ENCODE measurements at regions of chr19 and their contacts with region 1.

Region 1: DNA sequence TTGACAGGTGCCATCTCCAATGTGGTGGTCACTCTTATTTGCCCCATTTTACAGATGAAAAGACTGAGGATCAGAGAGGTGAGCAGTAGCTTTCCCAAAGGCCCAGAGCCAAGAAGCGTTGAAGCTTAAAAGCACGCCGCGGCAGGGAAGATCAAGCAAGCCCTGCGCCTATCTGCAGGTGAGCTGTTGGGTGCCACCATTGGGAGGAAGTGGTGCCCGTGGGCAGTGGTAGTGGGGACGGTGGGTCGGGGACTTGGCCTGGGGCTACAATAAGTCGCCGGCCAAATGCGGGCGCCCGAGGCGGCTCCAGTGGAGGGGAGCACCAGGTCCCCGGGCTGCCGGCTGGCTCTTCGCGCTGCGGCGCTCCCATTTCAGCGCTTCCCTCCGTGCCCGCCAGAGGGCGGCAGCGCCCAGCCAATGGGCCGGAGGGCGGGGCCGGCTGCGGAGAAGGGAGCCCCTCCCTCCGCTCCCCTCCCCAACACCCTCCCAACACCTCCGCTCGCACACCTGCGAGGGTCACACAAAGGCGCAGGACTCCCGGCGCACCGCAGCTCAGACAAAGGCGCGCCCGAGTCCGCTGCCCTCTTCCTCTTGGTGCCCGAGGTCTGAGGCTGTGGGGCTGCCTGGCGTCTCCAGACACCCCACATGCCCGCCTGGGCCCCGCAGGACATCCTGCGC is 744 bp upstream of the POU2F2 start:
- DNase-seq: peak; percentile 91
- ATAC-seq: peak; percentile 86
- H3K4me3 Mint-ChIP-seq: peak overlapping the region; percentile 76
- H3K27ac Mint-ChIP-seq: no peak overlapping the region
- H3K4me1 Mint-ChIP-seq: peaks cover 20% of the 10 kb centered on the region
- H3K27me3 Mint-ChIP-seq: peaks cover 30% of the 10 kb centered on the region
- CTCF ChIP-seq: peak; percentile 91

Region 2: DNA sequence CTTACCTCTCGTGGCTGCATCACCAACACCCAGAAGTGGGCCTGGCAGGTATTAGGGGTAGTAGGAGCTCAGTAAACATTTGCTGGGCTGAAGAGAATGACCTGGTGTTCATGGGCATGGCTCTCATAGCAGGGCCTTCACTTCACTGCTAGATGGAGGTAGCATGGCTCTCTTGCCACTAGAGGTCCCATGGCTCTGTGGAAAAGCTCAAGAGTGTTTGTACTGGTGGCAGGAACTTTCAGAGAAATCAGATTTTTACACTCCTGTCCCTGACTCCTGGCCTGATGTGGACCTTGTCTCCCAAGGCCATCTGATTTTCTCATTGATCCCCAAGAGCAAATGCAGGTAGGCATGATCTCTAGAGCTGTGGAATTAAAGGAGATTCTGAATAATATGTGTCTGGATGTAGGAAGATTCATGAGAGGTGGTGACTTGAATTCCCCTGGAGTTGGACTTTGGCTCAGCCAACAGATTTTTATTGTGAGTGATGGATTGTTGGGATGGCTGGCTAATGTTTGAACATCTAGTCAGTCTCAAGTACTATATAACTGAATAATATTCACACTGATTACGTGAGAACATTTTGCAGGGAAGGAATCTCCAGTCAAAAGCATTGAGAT is 51.3 kb before region 1 on chr19:
- CTCF ChIA-PET with region 1: no interaction called
- POLR2A ChIA-PET with region 1: no interaction called
- DNase-seq: no peak
- ATAC-seq: peak; percentile 72
- H3K4me3 Mint-ChIP-seq: no peak overlapping the region
- H3K27ac Mint-ChIP-seq: peak overlapping the region; percentile 46; the same call in 1 of the 2 replicates
- H3K4me1 Mint-ChIP-seq: peaks cover 18% of the 10 kb centered on the region
- H3K27me3 Mint-ChIP-seq: no peaks in the 10 kb centered on the region
- CTCF ChIP-seq: no peak

Region 3: GRCh38 chr19:42092350-42092749 is 40.6 kb before region 1 on chr19:
- CTCF ChIA-PET with region 1: no interaction called
- POLR2A ChIA-PET with region 1: no interaction called
- DNase-seq: peak; percentile 69
- ATAC-seq: peak; percentile 40
- H3K4me3 Mint-ChIP-seq: no peak overlapping the region
- H3K27ac Mint-ChIP-seq: no peak overlapping the region
- H3K4me1 Mint-ChIP-seq: peaks cover 31% of the 10 kb centered on the region
- H3K27me3 Mint-ChIP-seq: peaks cover 20% of the 10 kb centered on the region
- CTCF ChIP-seq: no peak; the same call in 1 of the 2 replicates

Region 4: GRCh38 chr19:42184401-42184861 is 51.4 kb after region 1 on chr19:
- CTCF ChIA-PET with region 1: interaction called, 28 read pairs
- POLR2A ChIA-PET with region 1: interaction called, 5 read pairs
- DNase-seq: peak; percentile 96
- ATAC-seq: peak; percentile 93
- H3K4me3 Mint-ChIP-seq: no peak overlapping the region
- H3K27ac Mint-ChIP-seq: no peak overlapping the region
- H3K4me1 Mint-ChIP-seq: peaks cover 8% of the 10 kb centered on the region
- H3K27me3 Mint-ChIP-seq: peaks cover 19% of the 10 kb centered on the region
- CTCF ChIP-seq: peak; percentile 93

Measured in WTC11 (cell line).